GM18951 (cell line): ENCODE measurements at regions of chr4 and their contacts with region 1.

Region 1: DNA sequence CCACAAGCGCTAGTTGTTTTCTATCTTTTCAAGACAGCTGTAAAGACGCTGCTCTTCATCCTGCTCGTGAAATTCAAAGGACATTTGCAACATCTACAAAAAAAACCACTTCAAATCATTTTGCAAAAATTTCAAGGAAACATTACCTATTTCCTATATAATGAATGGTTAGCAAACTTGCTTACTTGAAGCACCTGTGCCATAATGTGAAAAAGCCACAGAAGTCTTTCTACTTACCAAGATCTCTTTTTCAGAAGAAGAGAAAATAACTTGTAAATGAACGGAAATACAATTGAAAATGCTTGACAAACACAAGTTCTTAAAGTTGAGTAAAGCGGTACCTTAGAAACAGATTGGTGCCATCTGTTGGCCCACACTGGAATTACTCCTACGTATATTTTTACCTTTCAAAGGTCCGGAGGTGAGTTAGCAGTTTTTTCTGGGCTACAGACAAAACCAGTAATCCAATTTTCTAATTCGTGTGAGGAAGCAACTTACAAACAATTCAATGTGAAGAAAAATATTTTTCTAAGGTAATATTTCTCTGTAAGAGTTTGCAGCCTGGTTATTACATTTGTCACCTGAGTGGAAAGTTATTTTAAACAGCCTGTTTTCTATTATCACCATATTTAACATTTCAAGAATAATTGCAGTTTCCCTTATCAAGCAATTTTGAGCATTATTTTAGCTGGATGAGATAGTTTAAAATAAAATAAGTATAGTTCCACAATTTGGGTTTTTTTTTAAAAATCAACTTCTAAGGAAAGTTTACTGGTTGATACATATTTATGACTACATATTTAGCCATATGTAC is at the start of gene TLR6:
- POLR2A ChIP-seq: peak; percentile 16

Region 2: DNA sequence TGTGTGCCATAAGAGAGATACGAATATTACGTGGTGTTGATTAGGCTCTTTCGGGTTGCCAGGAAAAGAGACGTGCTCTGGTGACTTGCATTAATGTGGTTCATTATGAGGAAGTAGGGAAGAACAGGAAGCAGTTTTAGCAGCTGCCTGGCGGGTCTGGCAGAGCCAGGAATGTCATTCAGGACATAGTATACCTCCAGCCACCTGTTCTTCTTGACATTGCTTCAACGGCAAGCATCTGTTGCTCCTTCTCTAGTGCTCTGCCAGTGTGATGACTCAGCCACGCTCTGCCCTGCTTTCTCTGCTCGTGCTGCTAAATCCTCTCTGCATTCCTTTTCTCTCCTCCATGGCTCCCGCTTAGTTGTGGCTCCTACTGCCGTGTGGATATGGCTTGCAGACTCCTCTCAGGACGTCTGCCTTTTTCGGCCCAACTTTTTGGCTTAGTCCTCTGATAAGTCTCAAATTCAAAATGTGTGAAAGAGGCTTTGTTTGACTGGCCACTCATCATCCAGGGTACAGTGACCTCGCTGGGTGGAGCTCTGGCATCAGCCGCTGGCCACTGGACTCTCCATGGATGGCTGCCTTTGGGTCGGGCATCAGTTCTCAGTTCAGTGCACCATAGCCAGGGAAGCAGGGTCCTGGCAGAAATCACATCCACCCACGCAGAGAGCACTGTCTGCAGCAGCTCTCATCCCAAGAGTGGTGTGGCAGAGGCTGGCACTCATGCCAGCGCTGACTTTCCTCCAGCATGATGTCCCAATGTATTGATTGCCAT is 282.0 kb before region 1 on chr4:
- in situ Hi-C with region 1: no loop called
- POLR2A ChIP-seq: no peak

Region 3: DNA sequence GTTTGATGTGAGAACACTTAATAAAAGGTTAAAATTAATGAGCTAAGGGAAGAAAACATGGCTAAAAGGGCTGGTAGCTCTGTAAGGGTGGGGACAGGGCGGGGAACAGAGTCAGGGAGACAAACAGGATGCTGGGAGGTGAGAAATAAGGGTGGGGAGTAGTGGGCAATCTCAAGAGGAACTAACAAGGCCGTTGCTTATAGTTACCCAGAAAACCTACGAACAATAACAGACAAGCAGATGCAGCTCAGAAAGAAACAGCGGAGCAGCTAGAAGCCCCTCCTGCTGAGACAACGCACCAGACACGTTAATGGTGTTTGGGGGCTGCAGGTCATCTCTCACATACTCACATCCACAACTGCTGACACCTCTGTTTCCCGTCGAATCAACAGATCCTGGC is 202.5 kb before region 1 on chr4:
- in situ Hi-C with region 1: no loop called
- POLR2A ChIP-seq: no peak

Region 4: DNA sequence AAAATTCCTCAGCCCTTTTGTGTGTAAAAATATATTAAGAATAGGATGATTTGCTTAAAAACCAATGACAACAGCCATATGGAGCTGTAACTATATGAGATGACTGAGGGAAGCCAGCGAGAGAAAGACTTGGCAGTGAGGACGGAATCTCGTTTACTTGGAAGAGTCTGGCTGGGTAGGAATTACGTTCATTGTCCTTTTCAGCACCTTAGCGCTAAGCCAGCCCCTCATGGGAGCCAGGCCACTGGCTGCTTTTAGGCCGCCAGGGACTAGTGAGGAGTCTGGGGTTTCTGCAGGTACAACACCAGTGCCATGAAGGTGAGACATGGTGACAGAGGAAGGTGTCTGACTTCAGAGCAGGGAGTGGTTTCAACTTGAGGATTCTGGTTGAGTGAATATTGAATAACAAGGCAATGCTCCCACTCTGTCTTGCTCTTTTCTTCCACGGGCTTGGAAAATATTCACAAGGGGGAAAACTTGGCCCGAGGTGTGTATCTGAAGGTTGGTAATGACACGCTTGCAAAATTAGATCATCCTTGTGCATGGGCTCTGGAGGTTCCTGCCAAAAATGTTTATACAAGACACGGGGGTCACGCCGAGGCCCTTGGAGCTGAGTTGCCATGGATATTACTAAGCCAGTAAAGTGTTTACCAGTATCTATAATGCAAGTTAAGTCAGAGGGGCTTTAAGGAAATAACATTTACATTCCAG is 175.3 kb before region 1 on chr4:
- in situ Hi-C with region 1: no loop called
- POLR2A ChIP-seq: no peak

Region 5: DNA sequence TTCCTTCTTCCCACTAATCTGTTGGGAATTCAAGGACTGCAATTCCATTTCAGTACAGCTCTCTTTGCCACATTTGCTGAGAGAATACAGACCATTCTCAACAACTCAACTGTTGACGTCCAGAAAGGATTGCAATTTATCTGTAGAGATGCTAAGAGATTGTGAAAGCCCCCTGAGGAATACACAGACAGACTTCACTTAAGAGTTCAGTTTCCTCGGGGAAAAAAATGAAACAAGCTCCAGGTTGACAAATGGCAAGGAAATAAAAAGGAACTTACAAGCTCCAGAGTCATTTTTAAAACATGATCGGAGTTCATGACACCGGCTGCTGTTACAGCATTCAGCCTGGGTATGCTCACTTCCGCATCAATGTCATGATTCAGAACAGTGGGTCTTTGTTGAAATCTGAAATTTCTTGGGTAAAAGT is 87.8 kb before region 1 on chr4:
- in situ Hi-C with region 1: loop called (anchors 10 kb)
- POLR2A ChIP-seq: no peak